H1 (cell line): ENCODE measurements at regions of chr4 and their contacts with region 1.

Region 1: GRCh38 chr4:10018818-10019461 is 2.4 kb downstream of the SLC2A9 start:
- DNase-seq: peak; percentile 79 to 99
- H3K4me3 ChIP-seq: peak overlapping the region; percentile 25 to 61 (median 48); a peak in 7 of 8 replicates
- H3K27ac ChIP-seq: peak overlapping the region; percentile 51; the same call in 1 of the 2 replicates
- H3K4me1 ChIP-seq: peaks cover 0 to 12% (median 4%) of the 10 kb centered on the region in 4 experiments; a peak in 5 of 7 replicates
- H3K27me3 ChIP-seq: peaks cover 0 to 12% (median 6%) of the 10 kb centered on the region in 4 experiments; a peak in 4 of 7 replicates
- CTCF ChIP-seq: peak in 2 of 3 experiments; percentile 96 to 100; a peak in 3 of 4 replicates
- EP300 ChIP-seq: no peak
- POLR2A ChIP-seq: no peak; a peak in 1 of 3 replicates
- RAD21 ChIP-seq: peak; percentile 91 to 96

Region 2: GRCh38 chr4:10033191-10033881 is 14.4 kb after region 1 on chr4:
- CTCF ChIA-PET with region 1: interaction called, 29 read pairs
- POLR2A ChIA-PET with region 1: no interaction called
- DNase-seq: no peak
- H3K4me3 ChIP-seq: no peak overlapping the region
- H3K27ac ChIP-seq: no peak overlapping the region
- H3K4me1 ChIP-seq: peaks cover 0 to 2% (median 0%) of the 10 kb centered on the region in 4 experiments; a peak in 1 of 7 replicates
- H3K27me3 ChIP-seq: no peaks in the 10 kb centered on the region; a peak in 1 of 7 replicates
- CTCF ChIP-seq: no peak
- EP300 ChIP-seq: no peak
- POLR2A ChIP-seq: no peak
- RAD21 ChIP-seq: no peak